Activated B cell treated with CpG ODN at 0.5 μM for 24 hours (primary cell): ENCODE measurements at regions of chr22 and their contacts with region 1.

Region 1: DNA sequence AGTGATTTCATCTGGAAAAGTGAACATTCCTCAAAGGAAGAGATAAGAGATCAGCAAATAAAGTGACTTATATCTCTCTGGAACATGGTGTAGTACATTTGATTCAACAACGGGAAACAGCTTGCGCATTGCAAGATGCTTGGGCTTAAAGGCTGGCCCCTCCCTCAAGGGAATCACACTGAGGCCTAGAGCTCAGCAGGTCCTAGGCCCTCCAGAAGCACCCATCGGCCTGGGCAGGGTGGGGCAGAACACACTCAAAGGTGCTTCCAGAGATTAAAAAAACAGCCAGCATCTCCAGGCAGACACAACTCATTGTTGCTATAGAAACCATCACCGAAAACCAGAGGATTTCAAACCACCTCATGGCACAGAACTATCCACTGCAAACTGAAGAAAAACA is 69.0 kb upstream of the ARFGAP3 start:
- DNase-seq: no peak
- ATAC-seq: no peak
- H3K4me3 Mint-ChIP-seq: peak overlapping the region; percentile 9
- H3K27ac Mint-ChIP-seq: peak overlapping the region; percentile 51
- H3K4me1 Mint-ChIP-seq: peaks cover 78% of the 10 kb centered on the region
- H3K27me3 Mint-ChIP-seq: no peaks in the 10 kb centered on the region
- CTCF ChIP-seq: no peak

Region 2: GRCh38 chr22:42901790-42902508 is 24.2 kb before region 1 on chr22:
- CTCF ChIA-PET with region 1: interaction called, 5 read pairs
- POLR2A ChIA-PET with region 1: no interaction called
- intact Hi-C with region 1: loop called (anchors 1 kb)
- DNase-seq: no peak
- ATAC-seq: peak; percentile 56
- H3K4me3 Mint-ChIP-seq: no peak overlapping the region
- H3K27ac Mint-ChIP-seq: no peak overlapping the region
- H3K4me1 Mint-ChIP-seq: peaks cover 7% of the 10 kb centered on the region
- H3K27me3 Mint-ChIP-seq: no peaks in the 10 kb centered on the region
- CTCF ChIP-seq: no peak

Region 3: DNA sequence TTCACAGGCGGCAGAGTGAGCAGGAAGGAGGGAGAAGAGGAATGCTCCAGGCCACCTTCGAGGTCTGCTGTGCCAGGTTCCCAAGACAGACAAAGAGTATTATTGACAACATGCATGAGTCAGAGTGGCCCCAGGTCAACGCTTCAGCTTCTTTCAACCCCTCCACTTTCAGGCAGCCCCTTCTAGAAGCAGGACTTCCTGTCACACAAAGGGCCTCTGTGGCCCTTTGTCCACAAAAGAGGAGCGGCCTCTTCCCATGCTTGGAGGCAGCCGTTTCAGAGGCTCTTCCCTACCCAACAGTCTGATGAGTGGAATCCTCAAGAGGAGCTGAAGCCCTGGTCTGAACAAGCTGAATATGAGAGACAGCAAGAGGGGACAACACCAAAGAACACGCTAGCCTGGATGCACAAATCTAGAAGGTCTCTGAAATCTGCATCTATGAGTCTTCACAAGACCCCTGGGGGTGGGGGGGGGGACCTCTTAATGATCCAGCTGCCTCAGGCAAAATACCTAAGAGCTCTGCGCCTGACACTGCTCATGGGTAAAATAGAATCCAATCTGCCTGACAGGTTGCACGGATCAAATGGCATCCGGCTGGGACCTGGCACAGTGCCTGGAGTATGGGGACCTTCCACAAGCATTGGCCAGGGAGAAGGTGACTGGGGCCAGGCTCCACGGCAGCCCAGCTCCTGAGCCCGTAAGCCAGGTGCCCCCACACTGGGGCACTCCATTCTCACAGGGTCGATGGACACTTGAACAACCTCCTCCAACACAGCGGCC is 21.3 kb after region 1 on chr22:
- CTCF ChIA-PET with region 1: no interaction called
- POLR2A ChIA-PET with region 1: no interaction called
- intact Hi-C with region 1: no loop called
- DNase-seq: no peak
- ATAC-seq: no peak
- H3K4me3 Mint-ChIP-seq: no peak overlapping the region
- H3K27ac Mint-ChIP-seq: no peak overlapping the region
- H3K4me1 Mint-ChIP-seq: peaks cover 41% of the 10 kb centered on the region
- H3K27me3 Mint-ChIP-seq: no peaks in the 10 kb centered on the region
- CTCF ChIP-seq: no peak